ENCODE measurements at regions of chr12 and their contacts with region 1.

Region 1: DNA sequence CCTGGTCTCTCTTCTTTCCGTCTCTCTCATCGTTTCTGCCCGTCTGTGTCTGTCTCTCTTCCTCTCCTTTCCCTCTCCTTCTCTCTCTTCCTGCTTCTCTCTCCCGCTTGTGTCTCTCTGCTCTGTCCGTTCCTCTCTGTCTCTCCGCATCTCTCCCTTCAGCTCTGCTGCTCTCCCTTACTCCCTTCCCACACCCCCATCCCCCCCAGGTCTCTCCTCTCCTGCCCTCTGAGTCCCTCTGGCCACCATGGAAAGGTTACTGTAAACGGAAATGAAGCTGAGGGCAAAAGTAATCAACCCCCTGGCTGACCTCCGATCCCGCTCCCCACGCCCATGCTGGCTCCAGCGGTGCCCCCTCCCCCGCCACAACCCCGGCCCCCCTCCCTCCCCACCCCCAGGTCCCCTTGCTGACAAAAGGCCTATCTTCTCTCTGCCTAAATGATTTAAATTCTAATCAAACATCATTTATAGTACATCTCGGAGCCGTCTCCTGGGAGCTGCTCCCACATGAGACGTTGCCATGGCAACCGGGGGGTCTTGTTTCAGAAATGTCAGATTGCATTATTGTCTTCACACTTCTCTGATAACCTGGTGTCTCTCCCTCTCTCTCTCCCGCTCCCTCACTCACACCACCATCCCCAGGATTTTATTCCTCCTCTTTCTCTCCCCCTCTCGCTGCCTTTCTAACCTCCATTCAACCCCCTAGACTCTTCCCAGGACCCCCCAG is 203.8 kb downstream of the RBM19 start:
- DNase-seq: no peak
- H3K4me3 ChIP-seq: no peak overlapping the region
- H3K27ac ChIP-seq: no peak overlapping the region
- H3K4me1 ChIP-seq: no peaks in the 10 kb centered on the region
- H3K27me3 ChIP-seq: no peaks in the 10 kb centered on the region
- CTCF ChIP-seq: no peak
- POLR2A ChIP-seq: no peak

Region 2: DNA sequence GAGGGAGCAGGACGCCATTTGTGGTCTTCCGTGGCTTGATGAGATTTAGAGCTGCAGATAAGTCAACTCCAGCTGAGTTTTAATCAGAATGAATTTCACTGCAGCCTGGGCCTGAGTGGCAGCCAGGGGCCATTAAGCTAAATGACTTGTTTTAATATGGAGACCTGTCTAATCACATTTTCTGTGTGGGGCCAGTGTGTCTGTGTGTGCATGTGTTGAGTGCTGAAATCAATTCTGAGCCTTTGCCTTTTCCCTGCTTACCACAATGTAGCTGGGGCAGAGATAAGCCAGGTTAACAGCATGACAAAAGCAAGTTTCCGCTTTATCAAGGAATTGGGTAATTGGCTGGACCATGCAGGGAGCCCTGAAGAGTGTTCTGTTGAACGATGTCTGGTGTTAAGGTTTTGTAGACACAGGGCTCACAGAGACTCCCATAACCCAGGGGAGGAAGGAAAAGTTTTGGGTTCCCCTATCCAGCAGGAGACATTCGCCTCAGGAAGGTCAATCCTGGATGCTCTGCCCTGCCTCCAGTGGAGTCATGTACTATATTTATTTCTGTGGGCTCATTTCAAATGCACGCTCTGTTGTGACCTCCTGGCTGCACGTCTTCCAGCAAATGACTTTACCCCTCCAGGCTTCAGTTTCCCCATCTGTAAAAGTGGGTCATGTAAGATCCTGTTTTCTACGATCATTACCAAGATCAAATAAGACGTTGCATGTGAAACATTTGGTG is 946.6 kb before region 1 on chr12:
- intact Hi-C with region 1: loop called (anchors 5 kb)
- DNase-seq: no peak
- H3K4me3 ChIP-seq: no peak overlapping the region
- H3K27ac ChIP-seq: no peak overlapping the region
- H3K4me1 ChIP-seq: no peaks in the 10 kb centered on the region
- H3K27me3 ChIP-seq: no peaks in the 10 kb centered on the region
- CTCF ChIP-seq: no peak
- POLR2A ChIP-seq: no peak

Region 3: DNA sequence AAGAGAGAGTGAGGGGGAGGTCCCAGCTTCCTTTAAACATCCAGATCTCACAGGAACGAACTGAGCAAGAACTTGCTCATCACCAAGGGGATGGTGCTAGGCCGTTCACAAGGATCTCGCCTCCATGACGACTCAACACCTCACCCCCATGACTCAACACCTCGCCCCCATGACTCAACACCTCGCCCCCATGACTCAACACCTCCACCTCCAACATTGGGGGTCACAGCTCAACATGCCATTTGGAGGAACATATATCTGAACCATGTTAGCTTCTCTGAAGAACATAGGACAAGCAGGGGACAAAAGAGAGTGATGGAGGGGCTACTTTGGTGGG is 224.6 kb before region 1 on chr12:
- intact Hi-C with region 1: no loop called
- DNase-seq: no peak
- H3K4me3 ChIP-seq: no peak overlapping the region
- H3K27ac ChIP-seq: no peak overlapping the region
- H3K4me1 ChIP-seq: no peaks in the 10 kb centered on the region
- H3K27me3 ChIP-seq: no peaks in the 10 kb centered on the region
- CTCF ChIP-seq: no peak
- POLR2A ChIP-seq: no peak

Region 4: DNA sequence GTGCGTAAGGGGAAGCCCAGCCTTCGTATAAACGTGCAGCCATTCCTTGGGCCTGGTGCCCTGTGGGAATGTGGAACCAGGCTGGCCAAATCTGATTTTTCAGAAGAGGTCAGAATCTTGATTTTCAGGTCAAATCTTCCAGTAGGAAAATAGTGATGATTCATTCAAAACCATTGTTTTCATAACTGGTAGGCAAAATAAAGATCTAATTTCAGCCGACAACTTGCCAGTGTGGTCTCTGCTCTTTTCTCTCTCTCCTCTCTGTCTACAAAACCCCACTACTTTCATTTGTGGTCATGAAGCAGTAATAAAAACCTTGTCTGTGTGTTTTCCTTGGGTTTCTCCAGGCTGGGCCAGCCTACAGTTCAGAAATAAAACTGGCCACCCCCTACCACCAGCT is 68.7 kb after region 1 on chr12:
- intact Hi-C with region 1: no loop called
- DNase-seq: no peak
- H3K4me3 ChIP-seq: no peak overlapping the region
- H3K27ac ChIP-seq: no peak overlapping the region
- H3K4me1 ChIP-seq: no peaks in the 10 kb centered on the region
- H3K27me3 ChIP-seq: no peaks in the 10 kb centered on the region
- CTCF ChIP-seq: no peak
- POLR2A ChIP-seq: no peak